Activated CD4-positive, alpha-beta T cell treated with anti-CD3 and anti-CD28 coated beads, Interleukin-2, amount 10 ng/mL, durations not matched to agents 24 days and 14 days (primary cell): ENCODE measurements at regions of chr1 and their contacts with region 1.

Region 1: DNA sequence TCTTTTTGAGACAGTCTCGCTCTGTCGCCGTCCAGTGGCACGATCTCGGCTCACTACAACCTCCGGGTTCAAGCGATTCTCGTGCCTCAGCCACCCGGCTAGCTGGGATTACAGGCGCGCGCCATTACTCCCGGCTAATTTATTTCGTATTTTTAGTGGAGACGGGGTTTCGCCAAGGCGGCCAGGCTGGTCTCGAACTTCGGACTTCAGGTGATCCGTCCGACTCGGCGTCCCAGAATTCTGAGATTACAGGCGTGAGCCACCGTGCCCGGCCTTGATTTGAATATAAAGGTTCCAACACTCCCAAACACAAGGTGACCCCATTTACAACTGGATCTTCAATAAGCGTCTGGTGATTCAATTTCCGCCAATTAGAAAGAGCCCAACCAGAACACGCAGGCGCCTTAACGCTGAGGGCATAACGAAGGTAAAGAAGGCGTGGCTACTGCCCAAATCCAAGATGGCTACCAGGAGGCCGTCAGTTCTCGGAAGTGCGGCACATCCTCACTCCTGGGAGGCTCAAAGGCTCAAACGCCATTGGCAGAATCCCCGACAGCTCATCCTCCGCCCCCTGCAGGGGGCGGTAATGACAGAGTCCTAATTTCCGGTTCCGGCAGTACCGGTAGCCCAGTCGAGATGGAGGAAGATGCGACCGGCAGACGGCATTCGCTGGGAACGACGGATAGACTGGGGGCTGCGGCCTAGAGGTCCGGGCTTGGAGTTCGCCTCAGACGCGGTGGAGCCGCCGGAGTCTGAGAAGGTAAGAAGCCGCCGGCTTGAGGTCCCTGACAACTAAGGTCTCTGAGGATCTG is at the start of gene SLC25A44:
- DNase-seq: peak; percentile 99
- H3K4me3 Mint-ChIP-seq: peak within 1 kb of the TSS; percentile 100
- H3K27ac Mint-ChIP-seq: peak within 1 kb of the TSS; percentile 97
- H3K4me1 Mint-ChIP-seq: peaks cover 52% of the 10 kb centered on the region
- H3K27me3 Mint-ChIP-seq: no peaks in the 10 kb centered on the region
- total RNA-seq, gene SLC25A44: 61.0 and 67.9 TPM in 2 replicates

Region 2: DNA sequence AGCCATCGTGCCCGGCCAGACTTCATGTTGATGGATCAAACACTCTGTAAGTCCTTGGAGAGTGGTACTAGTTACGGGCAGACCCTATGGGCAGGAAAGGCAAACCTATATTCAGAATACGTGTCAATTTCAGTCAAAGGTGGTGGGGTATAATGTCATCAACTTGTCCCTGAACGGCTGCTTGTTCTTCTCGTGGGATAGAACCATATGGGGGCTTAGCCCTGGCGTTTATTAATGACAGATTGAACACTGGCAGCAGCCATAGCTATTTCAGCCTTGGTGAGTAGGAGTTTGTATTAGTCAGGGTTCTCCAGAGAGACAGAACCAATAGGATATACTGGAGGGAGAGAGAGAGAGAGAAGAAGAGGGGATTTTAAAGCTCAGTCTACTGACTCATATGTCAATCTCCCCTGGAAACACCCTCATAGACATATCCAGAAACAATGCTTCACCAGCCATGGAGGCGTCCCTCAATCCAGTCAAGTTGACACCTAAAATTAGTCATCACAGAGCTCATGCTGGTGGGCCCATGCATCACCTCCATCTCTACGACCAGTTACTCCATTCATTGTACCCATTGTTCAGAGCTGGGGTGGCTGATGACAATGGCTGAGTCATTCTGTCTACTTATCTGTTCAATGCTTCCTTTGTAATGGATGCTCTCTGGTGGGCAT is 1888.9 kb before region 1 on chr1:
- intact Hi-C with region 1: no loop called
- DNase-seq: no peak
- H3K4me3 Mint-ChIP-seq: no peak overlapping the region
- H3K27ac Mint-ChIP-seq: no peak overlapping the region
- H3K4me1 Mint-ChIP-seq: peaks cover 19% of the 10 kb centered on the region
- H3K27me3 Mint-ChIP-seq: no peaks in the 10 kb centered on the region

Region 3: GRCh38 chr1:156146020-156146768 is 47.5 kb before region 1 on chr1:
- intact Hi-C with region 1: loop called (anchors 1 kb)
- DNase-seq: peak; percentile 84
- H3K4me3 Mint-ChIP-seq: peak overlapping the region; percentile 61
- H3K27ac Mint-ChIP-seq: peak overlapping the region; percentile 90
- H3K4me1 Mint-ChIP-seq: peaks cover 29% of the 10 kb centered on the region
- H3K27me3 Mint-ChIP-seq: no peaks in the 10 kb centered on the region

Region 4: DNA sequence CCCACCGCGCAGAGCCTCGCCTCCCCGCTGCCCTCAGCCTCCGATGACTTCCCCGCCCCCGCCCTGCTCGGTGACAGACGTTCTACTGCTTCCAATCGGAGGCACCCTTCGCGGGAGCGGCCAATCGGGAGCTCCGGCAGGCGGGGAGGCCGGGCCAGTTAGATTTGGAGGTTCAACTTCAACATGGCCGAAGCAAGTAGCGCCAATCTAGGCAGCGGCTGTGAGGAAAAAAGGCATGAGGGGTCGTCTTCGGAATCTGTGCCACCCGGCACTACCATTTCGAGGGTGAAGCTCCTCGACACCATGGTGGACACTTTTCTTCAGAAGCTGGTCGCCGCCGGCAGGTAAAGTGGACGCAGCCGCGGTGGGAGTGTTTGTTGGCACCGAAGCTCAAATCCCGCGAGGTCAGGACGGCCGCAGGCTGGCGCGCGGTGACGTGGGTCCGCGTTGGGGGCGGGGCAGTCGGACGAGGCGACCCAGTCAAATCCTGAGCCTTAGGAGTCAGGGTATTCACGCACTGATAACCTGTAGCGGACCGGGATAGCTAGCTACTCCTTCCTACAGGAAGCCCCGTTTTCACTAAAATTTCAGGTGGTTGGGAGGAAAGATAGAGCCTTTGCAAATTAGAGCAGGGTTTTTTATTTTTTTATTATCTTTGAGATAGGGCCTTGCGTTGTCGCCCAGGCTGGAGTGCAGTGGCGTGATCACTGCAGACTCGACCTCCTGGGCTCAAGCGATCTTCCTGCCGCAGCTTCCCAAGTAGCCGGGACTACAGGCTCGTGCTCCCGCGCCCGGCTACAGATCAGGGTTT is 19.3 kb after region 1 on chr1 and contains the start of gene PMF1:
- intact Hi-C with region 1: loop called (anchors 1 kb)
- DNase-seq: peak; percentile 98
- H3K4me3 Mint-ChIP-seq: peak within 1 kb of the TSS; percentile 98
- H3K27ac Mint-ChIP-seq: peak within 1 kb of the TSS; percentile 99
- H3K4me1 Mint-ChIP-seq: peaks cover 38% of the 10 kb centered on the region
- H3K27me3 Mint-ChIP-seq: no peaks in the 10 kb centered on the region
- total RNA-seq, gene PMF1: 107 and 113 TPM in 2 replicates

Region 5: GRCh38 chr1:156456622-156457465 is 263.1 kb after region 1 on chr1:
- intact Hi-C with region 1: loop called (anchors 10 kb)
- DNase-seq: peak; percentile 98
- H3K4me3 Mint-ChIP-seq: peak overlapping the region; percentile 92
- H3K27ac Mint-ChIP-seq: peak overlapping the region; percentile 98
- H3K4me1 Mint-ChIP-seq: peaks cover 16% of the 10 kb centered on the region
- H3K27me3 Mint-ChIP-seq: peaks cover 14% of the 10 kb centered on the region

Region 6: GRCh38 chr1:156751758-156752757 is 558.4 kb after region 1 on chr1:
- intact Hi-C with region 1: loop called (anchors 10 kb)
- DNase-seq: peak; percentile 98
- H3K4me3 Mint-ChIP-seq: peak overlapping the region; percentile 97
- H3K27ac Mint-ChIP-seq: peak overlapping the region; percentile 96
- H3K4me1 Mint-ChIP-seq: peaks cover 33% of the 10 kb centered on the region
- H3K27me3 Mint-ChIP-seq: no peaks in the 10 kb centered on the region